ENCODE measurements at regions of chr7 and their contacts with region 1.

Region 1: GRCh38 chr7:100568896-100569844 is 4.5 kb downstream of the SAP25 start:
- DNase-seq: peak; percentile 67 to 86
- H3K4me3 ChIP-seq: peak overlapping the region; percentile 42 to 66 (median 44)
- H3K27ac ChIP-seq: no peak overlapping the region
- H3K4me1 ChIP-seq: peaks cover 0 to 46% (median 27%) of the 10 kb centered on the region in 4 experiments; a peak in 6 of 7 replicates
- H3K27me3 ChIP-seq: peaks cover 0 to 4% (median under 1%) of the 10 kb centered on the region in 4 experiments; a peak in 1 of 7 replicates
- CTCF ChIP-seq: peak in 2 of 3 experiments; percentile 55 to 76; a peak in 2 of 4 replicates
- EP300 ChIP-seq: no peak
- POLR2A ChIP-seq: peak in 1 of 2 experiments; percentile 85; a peak in 2 of 3 replicates
- RAD21 ChIP-seq: peak; percentile 34 to 39; a peak in 3 of 4 replicates

Region 2: GRCh38 chr7:100266576-100267354 is 302.4 kb before region 1 on chr7:
- CTCF ChIA-PET with region 1: no interaction called
- POLR2A ChIA-PET with region 1: no interaction called
- DNase-seq: no peak
- H3K4me3 ChIP-seq: no peak overlapping the region
- H3K27ac ChIP-seq: no peak overlapping the region
- H3K4me1 ChIP-seq: peaks cover 0 to 12% (median 7%) of the 10 kb centered on the region in 4 experiments; a peak in 6 of 7 replicates
- H3K27me3 ChIP-seq: no peaks in the 10 kb centered on the region
- CTCF ChIP-seq: no peak
- EP300 ChIP-seq: no peak
- POLR2A ChIP-seq: no peak
- RAD21 ChIP-seq: no peak

Region 3: GRCh38 chr7:100595188-100595587 is 26.0 kb after region 1 on chr7:
- CTCF ChIA-PET with region 1: interaction called, 171 read pairs
- POLR2A ChIA-PET with region 1: interaction called, 10 read pairs
- DNase-seq: no peak
- H3K4me3 ChIP-seq: no peak overlapping the region
- H3K27ac ChIP-seq: no peak overlapping the region
- H3K4me1 ChIP-seq: peaks cover 0 to 4% (median under 1%) of the 10 kb centered on the region in 4 experiments; a peak in 1 of 7 replicates
- H3K27me3 ChIP-seq: peaks cover 0 to 2% (median under 1%) of the 10 kb centered on the region in 4 experiments; a peak in 4 of 7 replicates
- CTCF ChIP-seq: no peak
- EP300 ChIP-seq: no peak
- POLR2A ChIP-seq: no peak
- RAD21 ChIP-seq: no peak

Region 4: DNA sequence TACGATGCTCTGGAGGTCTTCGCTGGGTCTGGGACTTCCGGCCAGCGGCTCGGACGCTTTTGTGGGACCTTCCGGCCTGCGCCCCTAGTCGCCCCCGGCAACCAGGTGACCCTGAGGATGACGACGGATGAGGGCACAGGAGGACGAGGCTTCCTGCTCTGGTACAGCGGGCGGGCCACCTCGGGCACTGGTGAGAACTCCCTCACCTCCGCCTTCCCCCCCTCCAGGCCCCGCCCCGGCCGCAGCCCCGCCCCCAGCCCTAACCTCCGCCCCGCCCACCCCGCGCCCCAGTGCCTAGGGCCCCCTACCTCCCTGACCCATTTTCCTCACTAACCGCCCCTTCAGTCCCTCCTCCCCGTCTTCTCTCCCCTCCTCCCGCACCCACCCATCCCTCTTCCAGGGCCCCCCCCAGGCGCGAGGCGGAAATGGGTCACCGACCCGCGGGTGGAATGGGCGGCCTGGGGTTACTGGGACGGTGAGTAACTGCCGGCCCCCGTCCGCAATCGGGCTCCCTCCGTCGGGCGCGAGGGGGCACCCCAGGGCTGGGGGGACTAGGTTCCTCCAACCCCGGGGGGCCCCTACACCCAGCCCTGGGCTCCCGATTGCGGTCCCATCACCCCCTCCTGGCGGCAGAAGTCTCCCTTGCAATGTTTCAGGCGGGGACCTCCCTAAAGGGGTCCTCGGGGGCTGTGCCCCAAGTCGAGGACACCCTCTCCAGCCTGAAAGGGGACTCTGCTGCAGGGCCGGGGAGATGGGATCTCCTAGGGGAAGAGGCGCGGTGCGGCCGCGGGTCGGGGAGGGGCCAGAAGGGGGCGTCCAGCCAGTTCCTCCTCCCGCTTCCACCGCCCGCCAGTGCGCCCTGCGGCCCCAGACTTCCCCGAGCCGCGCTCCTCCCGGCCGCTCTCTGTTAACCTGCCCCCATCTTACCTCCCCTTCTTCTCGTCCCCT is 35.1 kb after region 1 on chr7:
- CTCF ChIA-PET with region 1: interaction called, 6 read pairs
- POLR2A ChIA-PET with region 1: interaction called, 17 read pairs
- DNase-seq: peak in 1 of 2 experiments; percentile 92
- H3K4me3 ChIP-seq: peak overlapping the region; percentile 68 to 82 (median 78)
- H3K27ac ChIP-seq: peak overlapping the region; percentile 48; the same call in 1 of the 2 replicates
- H3K4me1 ChIP-seq: peaks cover 0 to 31% (median 20%) of the 10 kb centered on the region in 4 experiments; a peak in 6 of 7 replicates
- H3K27me3 ChIP-seq: peaks cover 0 to 10% (median 4%) of the 10 kb centered on the region in 4 experiments; a peak in 2 of 7 replicates
- CTCF ChIP-seq: peak in 1 of 3 experiments; percentile 27; a peak in 2 of 4 replicates
- EP300 ChIP-seq: no peak
- POLR2A ChIP-seq: peak in 1 of 2 experiments; percentile 88; a peak in 2 of 3 replicates
- RAD21 ChIP-seq: peak; percentile 12 to 16; a peak in 2 of 4 replicates

Region 5: GRCh38 chr7:100699018-100699417 is 129.8 kb after region 1 on chr7:
- CTCF ChIA-PET with region 1: no interaction called
- POLR2A ChIA-PET with region 1: no interaction called
- DNase-seq: no peak
- H3K4me3 ChIP-seq: no peak overlapping the region
- H3K27ac ChIP-seq: no peak overlapping the region
- H3K4me1 ChIP-seq: peaks cover 0 to 6% (median 2%) of the 10 kb centered on the region in 4 experiments; a peak in 6 of 7 replicates
- H3K27me3 ChIP-seq: no peaks in the 10 kb centered on the region
- CTCF ChIP-seq: no peak
- EP300 ChIP-seq: no peak
- POLR2A ChIP-seq: no peak
- RAD21 ChIP-seq: no peak

Region 6: DNA sequence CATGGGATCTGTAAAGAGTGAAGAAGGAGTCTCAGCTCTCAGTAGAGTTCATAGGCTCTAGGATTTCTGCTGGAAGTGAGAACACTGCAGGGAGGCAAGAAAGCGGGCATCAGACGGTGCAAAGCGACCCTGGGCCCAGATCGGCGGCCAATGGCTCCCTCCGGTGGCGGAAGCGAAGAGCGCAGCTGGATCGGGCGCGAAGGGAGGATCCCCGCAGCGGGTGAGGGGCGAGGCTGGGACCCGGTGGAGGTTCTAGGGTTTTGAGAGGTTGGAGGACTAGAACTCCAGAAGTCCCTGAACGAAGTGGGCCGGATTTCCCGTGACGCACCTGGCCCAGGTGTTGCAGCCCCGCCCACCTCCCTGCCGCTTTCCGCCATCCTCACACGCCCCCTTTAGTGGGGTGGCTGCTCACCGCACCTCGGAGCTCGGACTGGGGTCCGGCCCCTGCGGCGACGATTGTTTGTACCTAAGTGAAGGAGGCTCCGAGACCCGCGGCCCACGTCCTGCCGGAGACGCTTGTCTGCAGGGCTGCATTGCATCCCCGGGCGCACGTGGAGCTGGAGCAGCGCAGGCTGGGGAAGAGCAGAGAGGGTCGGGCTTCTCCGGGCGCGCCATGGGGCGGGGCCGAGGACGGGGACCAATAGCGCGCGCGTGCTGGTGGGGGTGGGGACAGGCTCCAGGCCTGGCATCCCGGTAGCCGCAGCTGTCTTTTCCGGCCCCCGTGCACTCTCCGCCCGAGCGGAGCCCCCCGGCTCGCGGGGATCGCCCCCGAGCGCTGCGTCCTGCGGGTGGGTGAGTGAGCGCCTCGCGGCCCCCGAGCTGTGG is 283.1 kb after region 1 on chr7 and contains the start of gene SLC12A9:
- CTCF ChIA-PET with region 1: no interaction called
- POLR2A ChIA-PET with region 1: no interaction called
- DNase-seq: peak in 1 of 2 experiments; percentile 99
- H3K4me3 ChIP-seq: peak within 1 kb of the TSS; percentile 50 to 95 (median 75)
- H3K27ac ChIP-seq: peak within 1 kb of the TSS; percentile 17; the same call in 1 of the 2 replicates
- H3K4me1 ChIP-seq: peaks cover 0 to 6% (median 0%) of the 10 kb centered on the region in 4 experiments; a peak in 1 of 7 replicates
- H3K27me3 ChIP-seq: no peaks in the 10 kb centered on the region
- CTCF ChIP-seq: peak in 2 of 3 experiments; percentile 91 to 92; a peak in 3 of 4 replicates
- EP300 ChIP-seq: no peak
- POLR2A ChIP-seq: peak in 1 of 2 experiments; percentile 15; a peak in 1 of 3 replicates
- RAD21 ChIP-seq: peak; percentile 98
- total RNA-seq, gene SLC12A9: 40.1 and 40.7 TPM in 2 replicates

Measured in H1 (cell line).